Activated B cell treated with CpG ODN at 0.5 μM for 24 hours (primary cell): ENCODE measurements at regions of chr9 and their contacts with region 1.

Region 1: DNA sequence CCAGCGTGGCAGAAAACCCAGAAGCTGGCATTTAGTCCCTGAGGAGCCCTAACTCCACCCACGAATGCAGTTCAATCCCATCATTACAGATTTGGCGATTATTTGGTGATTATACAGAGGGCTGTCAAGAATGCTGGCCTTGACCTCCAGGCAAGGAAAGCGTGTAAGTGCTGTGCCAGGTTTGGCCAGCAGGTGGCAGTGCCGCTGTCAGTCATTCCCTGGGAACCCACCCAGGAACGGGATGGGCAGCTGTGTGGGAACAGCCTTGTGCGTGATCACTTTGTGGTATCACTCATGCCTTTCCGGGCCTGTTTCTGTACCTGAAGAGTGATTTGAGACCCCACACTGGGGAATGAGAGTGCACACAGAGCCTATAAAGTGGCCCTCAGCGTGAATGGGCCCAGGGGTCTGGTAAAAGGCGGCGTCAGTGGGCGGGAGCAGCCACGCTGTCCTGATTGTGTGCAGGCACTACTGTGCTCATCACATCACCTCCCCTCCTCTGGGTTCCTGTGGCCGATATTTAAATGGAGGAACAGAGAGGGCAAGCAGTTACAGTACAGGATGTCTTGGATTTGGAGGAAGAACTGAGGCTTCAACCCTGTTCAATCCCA is 215.6 kb downstream of the ROR2 start:
- DNase-seq: peak; percentile 58
- ATAC-seq: peak; percentile 57
- H3K4me3 Mint-ChIP-seq: no peak overlapping the region
- H3K27ac Mint-ChIP-seq: no peak overlapping the region
- H3K4me1 Mint-ChIP-seq: no peaks in the 10 kb centered on the region
- H3K27me3 Mint-ChIP-seq: peaks cover 18% of the 10 kb centered on the region
- CTCF ChIP-seq: peak; percentile 98

Region 2: DNA sequence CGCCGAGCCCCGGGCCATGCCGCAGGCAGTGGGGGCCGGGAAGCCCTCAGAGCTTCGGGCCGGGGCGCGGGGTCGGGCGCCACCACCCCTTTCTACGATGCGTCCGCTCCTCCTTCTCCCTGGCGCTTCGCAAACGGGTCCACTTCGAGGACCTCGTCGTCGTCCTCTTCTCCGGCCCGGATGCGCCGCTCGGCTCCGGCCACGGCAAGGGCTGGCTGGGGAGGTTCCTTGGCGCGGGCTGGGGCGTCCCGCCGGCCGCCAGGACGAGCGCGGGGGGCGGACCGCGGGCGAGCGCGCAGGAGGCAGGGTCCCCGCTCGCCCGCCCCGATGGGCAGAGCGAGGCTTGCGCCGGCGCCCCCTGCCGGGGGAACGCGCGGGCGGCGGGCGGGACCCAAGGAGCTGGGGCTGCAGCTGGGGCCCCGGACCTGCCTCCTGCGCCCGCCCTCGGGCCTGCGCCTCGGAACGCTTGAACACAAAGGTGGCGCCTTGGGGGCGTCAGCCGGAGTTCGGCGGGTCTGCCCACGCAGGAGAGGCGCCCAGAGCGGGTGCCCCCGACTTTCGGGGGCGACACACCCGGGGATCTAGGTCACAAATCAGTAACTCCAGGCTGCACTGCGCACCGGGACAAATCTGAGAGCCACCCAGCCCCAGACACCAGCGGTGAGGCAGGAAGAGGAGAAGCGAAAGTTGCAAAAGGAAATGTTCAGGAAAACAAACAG is 215.6 kb after region 1 on chr9 and contains the start of gene ROR2:
- CTCF ChIA-PET with region 1: no interaction called
- POLR2A ChIA-PET with region 1: no interaction called
- intact Hi-C with region 1: loop called (anchors 1 kb)
- DNase-seq: peak; percentile 42
- ATAC-seq: peak; percentile 64
- H3K4me3 Mint-ChIP-seq: peak within 1 kb of the TSS; percentile 52
- H3K27ac Mint-ChIP-seq: no peak within 1 kb of the TSS
- H3K4me1 Mint-ChIP-seq: peaks cover 9% of the 10 kb centered on the region
- H3K27me3 Mint-ChIP-seq: peaks cover 67% of the 10 kb centered on the region
- CTCF ChIP-seq: no peak
- total RNA-seq, gene ROR2: 0.12 TPM in 1 of 2 replicates, not detected in the other